GM18951 (cell line): ENCODE measurements at regions of chr15 and their contacts with region 1.

Region 1: DNA sequence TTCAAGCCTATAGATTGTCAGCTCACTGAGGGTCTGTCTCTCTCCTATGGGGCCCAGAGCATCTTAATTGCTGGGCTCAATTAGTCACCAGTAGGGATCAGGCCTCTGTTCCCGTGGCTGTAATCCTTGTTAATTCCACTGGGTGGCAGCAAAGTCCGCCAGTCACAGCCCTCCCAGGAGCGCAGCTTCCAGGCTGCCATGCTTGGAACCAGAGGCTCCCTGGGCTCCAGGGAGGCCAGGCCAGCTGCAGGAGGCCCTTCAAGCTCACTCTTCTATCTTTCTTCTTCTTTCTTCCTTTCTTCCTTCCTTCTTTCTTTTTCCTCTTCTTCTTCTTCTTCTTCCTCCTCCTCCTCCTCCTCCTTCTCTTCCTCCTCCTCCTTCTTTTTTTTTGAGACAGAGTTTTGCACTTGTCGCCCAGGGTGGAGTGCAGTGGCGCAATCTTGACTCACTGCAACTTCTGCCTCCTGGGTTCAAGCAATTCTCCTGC is 14.4 kb downstream of the RNU5B-1 start:
- POLR2A ChIP-seq: no peak

Region 2: DNA sequence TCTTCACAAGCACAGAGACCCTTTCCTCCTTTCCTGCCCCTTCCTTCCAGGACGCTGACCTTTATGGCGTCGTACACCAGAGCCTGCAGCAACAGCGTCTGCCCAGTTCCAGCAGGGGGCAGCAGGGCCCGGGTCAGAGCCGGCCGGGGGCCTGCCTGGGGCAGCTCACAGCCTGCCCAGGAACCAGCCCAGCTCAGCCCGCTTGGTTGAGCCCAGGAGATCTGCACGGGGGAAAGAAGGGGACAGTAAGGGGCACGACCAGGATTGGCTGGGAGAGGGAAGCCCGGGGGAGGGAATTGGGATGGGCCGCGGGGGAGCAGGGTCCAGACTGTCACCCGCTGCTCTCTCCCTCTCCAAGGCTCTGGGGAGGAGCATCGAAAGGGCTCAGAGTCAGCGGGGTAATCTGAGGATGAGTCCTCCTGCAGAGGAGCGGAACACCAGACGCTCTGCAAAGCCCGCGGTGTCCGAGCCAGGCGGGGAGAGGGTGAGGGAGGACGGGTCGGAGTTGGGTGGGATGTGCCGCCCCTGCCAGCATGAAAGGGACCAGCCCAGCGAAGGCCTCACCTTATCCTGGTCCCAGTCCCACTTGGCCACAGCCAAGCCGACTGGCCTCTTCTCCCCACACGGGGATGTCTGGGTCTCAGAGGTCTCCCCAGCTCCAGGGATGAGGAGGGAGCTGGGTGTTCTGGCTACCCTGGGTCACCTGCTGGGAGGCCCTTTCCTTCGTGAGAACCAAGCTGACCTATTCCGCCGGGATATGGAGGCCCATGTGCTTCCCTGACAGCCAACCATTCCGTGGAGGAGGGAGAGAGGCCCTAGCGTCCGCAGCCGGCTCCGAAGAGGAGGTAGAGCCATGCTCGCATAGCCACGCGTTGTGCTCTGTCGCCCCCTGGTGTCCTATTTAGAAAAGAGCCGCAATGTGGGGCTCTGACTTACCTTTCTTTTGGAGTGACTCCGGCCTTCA is 66.3 kb after region 1 on chr15:
- in situ Hi-C with region 1: loop called (anchors 5 kb)
- POLR2A ChIP-seq: no peak